ENCODE measurements at regions of chr3 and their contacts with region 1.

Region 1: GRCh38 chr3:11944052-11944673 is 60.0 kb upstream of the SYN2 start:
- DNase-seq: peak; percentile 72
- ATAC-seq: peak; percentile 93
- H3K4me3 ChIP-seq: no peak overlapping the region
- H3K27ac ChIP-seq: no peak overlapping the region
- H3K4me1 ChIP-seq: no peaks in the 10 kb centered on the region
- H3K27me3 ChIP-seq: peaks cover 30% of the 10 kb centered on the region
- CTCF ChIP-seq: peak; percentile 88

Region 2: DNA sequence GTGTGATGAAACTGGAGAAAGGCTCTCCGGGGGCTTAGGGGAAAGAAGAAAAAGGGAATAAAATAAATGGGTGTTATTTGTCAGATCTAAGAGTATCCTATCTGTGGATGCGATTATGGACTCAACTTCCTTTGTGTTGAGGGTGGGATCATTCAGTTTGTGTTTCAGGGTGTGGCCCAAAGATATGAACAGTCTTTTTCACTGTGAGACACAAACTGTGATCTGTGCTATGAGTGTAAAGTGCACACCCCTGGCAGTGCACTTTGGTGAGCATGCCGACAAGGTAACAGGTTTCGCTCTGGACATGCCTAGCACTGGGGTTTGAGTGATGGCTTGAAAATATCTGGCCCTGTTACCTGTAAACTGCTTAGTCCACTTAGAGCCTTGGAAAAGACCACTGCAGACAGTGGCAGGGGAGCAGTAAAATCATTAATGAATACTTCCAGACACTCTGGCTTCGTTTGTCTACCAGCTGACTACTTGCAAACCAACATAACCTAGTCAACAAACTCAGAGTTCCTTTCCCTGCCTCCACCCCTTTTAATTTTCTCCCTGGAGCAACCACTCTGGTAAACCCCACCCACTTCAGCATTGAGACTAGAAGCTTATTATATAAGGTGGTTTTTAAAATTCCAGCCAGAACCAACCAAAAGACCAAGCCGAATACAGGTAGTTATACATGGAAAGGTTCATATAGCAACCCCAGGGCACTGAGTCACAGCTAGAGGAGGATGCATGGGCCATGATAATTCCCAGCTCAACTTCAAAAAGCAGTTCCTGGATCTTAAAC is 152.6 kb before region 1 on chr3:
- CTCF ChIA-PET with region 1: no interaction called
- POLR2A ChIA-PET with region 1: no interaction called
- intact Hi-C with region 1: no loop called
- DNase-seq: peak; percentile 6
- ATAC-seq: no peak
- H3K4me3 ChIP-seq: no peak overlapping the region
- H3K27ac ChIP-seq: no peak overlapping the region
- H3K4me1 ChIP-seq: no peaks in the 10 kb centered on the region
- H3K27me3 ChIP-seq: no peaks in the 10 kb centered on the region
- CTCF ChIP-seq: no peak

Region 3: GRCh38 chr3:11995120-11995519 is 51.0 kb after region 1 on chr3:
- CTCF ChIA-PET with region 1: no interaction called
- POLR2A ChIA-PET with region 1: interaction called, 10 read pairs
- intact Hi-C with region 1: no loop called
- DNase-seq: no peak
- ATAC-seq: no peak
- H3K4me3 ChIP-seq: no peak overlapping the region
- H3K27ac ChIP-seq: no peak overlapping the region
- H3K4me1 ChIP-seq: no peaks in the 10 kb centered on the region
- H3K27me3 ChIP-seq: peaks cover 93% of the 10 kb centered on the region
- CTCF ChIP-seq: no peak

Region 4: GRCh38 chr3:12027184-12027846 is 83.2 kb after region 1 on chr3:
- CTCF ChIA-PET with region 1: interaction called, 12 read pairs
- POLR2A ChIA-PET with region 1: no interaction called
- intact Hi-C with region 1: no loop called
- DNase-seq: no peak
- ATAC-seq: no peak
- H3K4me3 ChIP-seq: no peak overlapping the region
- H3K27ac ChIP-seq: no peak overlapping the region
- H3K4me1 ChIP-seq: no peaks in the 10 kb centered on the region
- H3K27me3 ChIP-seq: peaks cover 37% of the 10 kb centered on the region
- CTCF ChIP-seq: no peak

Region 5: DNA sequence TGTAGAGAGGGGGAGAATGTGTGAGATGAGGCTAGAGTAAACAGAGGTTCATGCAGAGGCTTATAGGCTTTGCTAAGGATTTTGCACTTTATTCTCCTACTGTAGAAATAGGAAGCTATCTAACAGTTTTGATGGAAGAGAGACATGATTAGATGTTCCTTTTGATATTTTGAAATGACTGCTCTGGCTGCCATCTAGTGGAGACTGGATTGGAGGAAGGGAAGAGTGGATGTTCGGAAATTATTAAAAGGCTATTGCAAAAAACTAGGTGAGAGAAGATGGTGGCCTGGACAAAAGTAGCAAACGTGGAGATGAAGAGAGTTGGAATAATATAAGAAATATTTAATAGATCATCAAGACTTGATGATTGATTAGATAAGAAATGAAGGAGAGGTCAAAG is 102.2 kb after region 1 on chr3:
- CTCF ChIA-PET with region 1: no interaction called
- POLR2A ChIA-PET with region 1: no interaction called
- intact Hi-C with region 1: loop called (anchors 1 kb)
- DNase-seq: peak; percentile 44
- ATAC-seq: peak; percentile 31; the same call in 1 of the 2 replicates
- H3K4me3 ChIP-seq: no peak overlapping the region
- H3K27ac ChIP-seq: no peak overlapping the region
- H3K4me1 ChIP-seq: no peaks in the 10 kb centered on the region
- H3K27me3 ChIP-seq: peaks cover 63% of the 10 kb centered on the region
- CTCF ChIP-seq: peak; percentile 68